ENCODE measurements at regions of chr1 and their contacts with region 1.

Region 1: GRCh38 chr1:44029906-44030604 is 1.2 kb downstream of the SLC6A9 start:
- DNase-seq: peak; percentile 96
- H3K4me3 ChIP-seq: peak overlapping the region; percentile 98
- H3K27ac ChIP-seq: peak overlapping the region; percentile 86
- H3K4me1 ChIP-seq: peaks cover 55% of the 10 kb centered on the region
- CTCF ChIP-seq: no peak

Region 2: DNA sequence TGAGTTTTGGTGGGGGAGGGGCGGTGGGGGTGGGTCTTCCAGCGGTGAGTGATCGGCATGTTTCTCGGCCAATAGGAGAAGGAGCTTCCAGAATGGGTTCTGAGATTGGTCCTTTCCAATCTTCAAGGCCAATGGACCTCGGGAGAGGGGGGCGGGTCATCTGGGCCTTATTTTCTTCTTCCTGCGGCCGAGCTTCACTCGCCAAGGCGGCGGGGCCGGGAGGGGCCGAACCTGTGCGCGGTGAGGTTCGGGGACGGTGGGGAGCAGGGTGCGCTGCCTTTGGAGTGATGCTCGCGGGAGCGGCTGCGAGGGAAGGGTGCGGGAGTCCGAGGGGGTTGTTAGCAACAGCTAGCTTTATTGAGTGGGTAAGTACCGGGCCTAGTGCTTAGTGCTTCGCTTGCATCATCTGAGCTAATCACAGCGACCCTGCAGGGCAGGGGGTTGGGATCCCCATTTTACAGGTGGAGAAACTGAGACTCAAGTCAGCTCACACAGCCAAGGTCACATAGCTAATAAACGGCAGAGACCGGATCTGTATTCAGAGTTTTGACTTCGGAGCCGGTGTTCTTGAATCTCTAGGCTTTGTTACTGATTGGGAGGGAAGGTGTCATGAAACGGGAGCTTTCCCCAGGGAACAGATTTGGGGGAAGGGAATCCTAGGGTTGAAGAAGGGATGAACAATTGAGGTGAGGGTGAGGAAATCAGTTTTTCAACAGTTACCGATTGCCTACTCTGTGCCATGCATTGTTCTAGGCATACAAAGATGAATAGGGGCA is 379.6 kb before region 1 on chr1:
- CTCF ChIA-PET with region 1: no interaction called
- POLR2A ChIA-PET with region 1: no interaction called
- intact Hi-C with region 1: loop called (anchors 2 kb)
- DNase-seq: peak; percentile 99
- H3K4me3 ChIP-seq: peak overlapping the region; percentile 98
- H3K27ac ChIP-seq: peak overlapping the region; percentile 61
- H3K4me1 ChIP-seq: peaks cover 27% of the 10 kb centered on the region
- CTCF ChIP-seq: no peak

Region 3: DNA sequence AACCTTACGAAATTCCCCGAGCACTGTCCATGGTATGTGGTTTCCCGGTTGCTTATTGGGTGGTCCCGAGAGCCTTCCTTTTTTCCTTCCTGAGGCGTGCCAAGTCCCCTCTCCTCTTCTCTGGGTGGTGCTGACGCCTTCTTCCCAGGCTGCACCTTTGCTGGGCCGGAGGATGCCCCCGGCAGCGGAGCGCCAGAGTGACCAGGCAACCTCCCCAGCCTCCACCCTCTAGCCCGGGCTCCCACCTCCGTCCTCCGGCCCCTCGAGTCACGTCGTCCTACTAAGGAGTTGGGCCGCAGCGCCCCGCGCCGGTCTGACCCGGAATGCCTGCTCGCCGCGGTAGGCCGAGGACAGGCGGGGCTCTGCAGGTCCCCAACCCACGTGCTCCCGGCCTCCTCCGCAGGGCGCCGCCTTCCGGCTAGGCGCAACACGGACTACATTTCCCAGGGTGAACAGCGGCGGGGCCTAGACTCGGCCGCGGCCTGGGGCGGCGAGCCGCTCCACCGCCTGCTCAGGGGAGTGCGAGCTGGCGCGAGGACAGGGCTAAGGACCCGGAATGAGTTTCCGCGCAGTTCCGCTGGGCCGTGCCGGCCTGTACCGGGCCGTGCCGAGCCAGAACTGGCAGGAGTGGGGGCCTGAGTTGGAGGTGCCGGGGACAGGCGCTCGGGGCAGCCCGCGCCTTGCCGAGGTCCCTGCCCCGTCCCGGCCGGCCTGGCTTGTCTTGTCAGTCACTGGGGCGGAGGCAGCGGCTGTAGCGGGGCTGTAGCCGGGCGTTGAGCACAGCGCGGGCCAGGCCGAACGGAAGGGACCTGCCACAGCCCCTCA is 83.6 kb before region 1 on chr1 and contains the start of gene IPO13:
- CTCF ChIA-PET with region 1: no interaction called
- POLR2A ChIA-PET with region 1: interaction called, 3 read pairs
- intact Hi-C with region 1: loop called (anchors 1 kb)
- DNase-seq: peak; percentile 97
- H3K4me3 ChIP-seq: peak within 1 kb of the TSS; percentile 76
- H3K27ac ChIP-seq: peak within 1 kb of the TSS; percentile 56
- H3K4me1 ChIP-seq: peaks cover 22% of the 10 kb centered on the region
- CTCF ChIP-seq: peak; percentile 84
- total RNA-seq, gene IPO13: 13.1 and 17.8 TPM in 2 replicates

Region 4: DNA sequence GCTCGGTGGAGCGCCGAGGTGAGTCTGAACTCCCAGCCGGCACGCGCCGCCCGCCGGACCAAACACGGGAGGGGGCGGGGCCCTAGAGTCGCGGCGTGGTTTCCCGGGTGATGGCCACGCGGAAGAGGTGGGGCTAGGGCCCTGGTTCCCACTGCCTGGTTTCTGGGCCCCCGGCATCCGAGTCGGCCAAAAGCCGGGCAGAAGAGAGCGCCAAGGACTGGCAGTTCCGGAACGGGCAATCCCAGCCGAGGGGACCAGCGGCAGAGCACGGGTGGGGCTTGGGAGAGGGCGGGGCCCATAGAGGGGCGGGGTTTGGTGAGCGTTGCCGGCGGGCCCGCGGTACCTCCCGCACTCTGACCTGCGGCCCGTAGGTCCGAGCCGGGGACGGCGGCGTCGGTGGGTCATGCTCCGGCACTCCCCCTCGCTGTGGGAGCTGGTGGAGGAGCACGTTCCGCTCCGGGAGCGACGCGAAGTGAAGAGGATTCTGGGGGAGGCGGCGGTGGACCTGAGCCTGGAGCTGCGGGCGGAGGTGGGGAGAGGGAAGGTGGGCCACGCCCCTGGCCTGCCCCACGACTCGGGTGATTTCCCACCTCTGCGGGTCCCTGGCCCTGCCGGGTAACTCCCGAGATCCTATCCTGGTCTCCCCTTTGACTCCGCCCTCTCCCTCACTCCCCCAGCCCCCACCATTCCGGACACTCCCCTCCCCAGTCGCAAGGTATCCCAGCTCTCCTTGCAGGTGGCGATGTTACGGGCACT is 38.4 kb before region 1 on chr1 and contains the start of gene CCDC24:
- CTCF ChIA-PET with region 1: no interaction called
- POLR2A ChIA-PET with region 1: interaction called, 4 read pairs
- intact Hi-C with region 1: loop called (anchors 1 kb)
- DNase-seq: peak; percentile 71
- H3K4me3 ChIP-seq: peak within 1 kb of the TSS; percentile 71
- H3K27ac ChIP-seq: no peak within 1 kb of the TSS
- H3K4me1 ChIP-seq: peaks cover 28% of the 10 kb centered on the region
- CTCF ChIP-seq: no peak
- total RNA-seq, gene CCDC24: 1.9 and 8.9 TPM in 2 replicates

Region 5: DNA sequence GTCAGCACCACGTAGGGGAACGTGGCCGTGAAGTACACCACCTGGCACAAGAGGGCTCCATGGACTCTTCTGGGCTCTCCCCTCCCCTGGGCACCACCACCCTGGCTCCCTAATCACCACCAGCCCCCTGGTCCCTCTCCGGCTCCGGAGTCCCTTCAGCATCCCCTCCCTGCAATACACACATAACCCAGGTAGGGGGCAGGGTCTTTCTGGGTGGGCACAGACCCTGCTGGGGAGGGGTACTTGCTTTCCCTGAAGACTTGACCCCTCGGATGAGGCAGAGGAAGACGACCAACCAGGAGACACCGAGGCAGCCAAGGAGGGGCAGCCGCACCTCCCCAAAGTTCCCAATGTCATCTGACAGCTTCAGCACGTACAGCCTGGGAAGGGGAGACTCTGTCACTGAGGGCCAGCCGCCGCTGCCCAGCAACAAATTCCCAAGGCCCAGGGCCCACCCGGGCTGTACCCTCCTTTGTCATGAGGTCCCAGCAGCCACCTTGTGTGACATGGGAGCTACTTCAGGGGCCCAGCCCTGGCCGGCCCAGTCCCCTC is 27.4 kb before region 1 on chr1:
- CTCF ChIA-PET with region 1: interaction called, 12 read pairs
- POLR2A ChIA-PET with region 1: interaction called, 3 read pairs
- intact Hi-C with region 1: no loop called
- DNase-seq: no peak
- H3K4me3 ChIP-seq: no peak overlapping the region
- H3K27ac ChIP-seq: no peak overlapping the region
- H3K4me1 ChIP-seq: no peaks in the 10 kb centered on the region
- CTCF ChIP-seq: peak; percentile 46; the same call in 1 of the 2 replicates

Region 6: DNA sequence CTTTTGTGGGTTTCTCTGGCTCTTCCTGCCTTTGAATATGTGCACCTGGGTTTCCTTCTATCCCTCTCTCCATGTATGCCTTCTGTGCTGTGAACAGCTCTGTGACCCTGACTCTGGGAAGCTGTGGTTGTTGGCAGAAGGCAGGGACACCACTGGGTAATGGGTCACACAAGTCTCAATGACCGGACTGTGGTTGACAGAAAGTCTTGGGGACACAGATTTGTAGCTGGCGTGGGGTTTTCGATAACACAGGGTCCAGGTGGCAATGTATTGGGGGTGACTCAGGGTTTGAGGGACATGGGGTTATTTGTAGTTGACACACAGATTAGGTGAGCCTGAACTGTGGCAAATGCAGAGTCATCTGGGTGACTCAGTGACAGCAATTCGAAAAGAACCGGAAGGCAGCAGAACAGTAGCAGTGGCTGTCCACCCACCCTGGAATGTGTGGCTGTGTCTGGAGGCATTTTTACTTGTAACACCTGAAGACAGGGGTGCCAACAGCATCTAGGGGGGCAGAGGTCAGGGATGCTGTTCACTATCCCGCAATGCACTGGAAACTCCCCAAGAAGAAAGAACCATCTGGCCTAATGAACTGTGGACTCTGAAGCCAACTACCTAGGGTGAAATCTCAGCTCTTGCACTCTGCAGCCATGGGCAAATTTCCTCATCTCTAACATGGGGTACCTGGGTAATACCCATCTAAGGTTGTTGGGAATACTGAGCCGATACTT is 14.2 kb after region 1 on chr1:
- CTCF ChIA-PET with region 1: interaction called, 12 read pairs
- POLR2A ChIA-PET with region 1: interaction called, 6 read pairs
- intact Hi-C with region 1: no loop called
- DNase-seq: no peak
- H3K4me3 ChIP-seq: no peak overlapping the region
- H3K27ac ChIP-seq: no peak overlapping the region
- H3K4me1 ChIP-seq: no peaks in the 10 kb centered on the region
- CTCF ChIP-seq: no peak

Region 7: GRCh38 chr1:44103270-44104131 is 73.4 kb after region 1 on chr1:
- CTCF ChIA-PET with region 1: no interaction called
- POLR2A ChIA-PET with region 1: no interaction called
- intact Hi-C with region 1: no loop called
- DNase-seq: no peak
- H3K4me3 ChIP-seq: no peak overlapping the region
- H3K27ac ChIP-seq: no peak overlapping the region
- H3K4me1 ChIP-seq: no peaks in the 10 kb centered on the region
- CTCF ChIP-seq: peak; percentile 44

Region 8: DNA sequence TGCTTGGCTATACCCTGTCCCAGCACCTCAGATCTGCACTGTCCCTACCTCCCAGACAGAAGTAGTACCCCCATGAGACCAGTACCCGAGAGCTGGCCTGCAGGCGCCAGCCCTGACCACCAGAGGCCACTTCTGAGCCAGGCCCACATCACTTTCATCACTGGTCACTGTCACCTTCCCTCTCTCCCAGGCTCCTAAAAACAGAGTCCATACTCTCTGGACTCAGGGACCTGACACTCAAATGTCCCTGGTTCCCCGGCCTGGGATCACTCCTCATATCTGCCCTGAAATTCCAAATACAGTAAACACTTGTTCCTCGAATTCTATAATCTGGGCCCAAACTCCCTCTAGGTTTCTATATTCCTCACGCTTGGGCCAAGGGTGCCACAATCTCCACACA is 625.6 kb after region 1 on chr1:
- CTCF ChIA-PET with region 1: no interaction called
- POLR2A ChIA-PET with region 1: no interaction called
- intact Hi-C with region 1: no loop called
- DNase-seq: peak; percentile 45
- H3K4me3 ChIP-seq: no peak overlapping the region
- H3K27ac ChIP-seq: no peak overlapping the region
- H3K4me1 ChIP-seq: no peaks in the 10 kb centered on the region
- CTCF ChIP-seq: peak; percentile 86

Measured in OCI-LY7 (cell line).